Activated CD4-positive, alpha-beta T cell treated with anti-CD3 and anti-CD28 coated beads for 36 hours (primary cell): ENCODE measurements at regions of chr14 and their contacts with region 1.

Region 1: GRCh38 chr14:52272375-52272774 is 4.9 kb downstream of the PTGDR start:
- DNase-seq: peak; percentile 37
- ATAC-seq: peak; percentile 27
- H3K4me3 Mint-ChIP-seq: no peak overlapping the region
- H3K27ac Mint-ChIP-seq: no peak overlapping the region
- H3K4me1 Mint-ChIP-seq: peaks cover 18% of the 10 kb centered on the region
- H3K27me3 Mint-ChIP-seq: peaks cover 30% of the 10 kb centered on the region

Region 2: GRCh38 chr14:51783765-51784164 is 488.6 kb before region 1 on chr14:
- CTCF ChIA-PET with region 1: no interaction called
- POLR2A ChIA-PET with region 1: no interaction called
- intact Hi-C with region 1: no loop called
- DNase-seq: no peak
- ATAC-seq: peak; percentile 52
- H3K4me3 Mint-ChIP-seq: no peak overlapping the region
- H3K27ac Mint-ChIP-seq: no peak overlapping the region
- H3K4me1 Mint-ChIP-seq: peaks cover 23% of the 10 kb centered on the region
- H3K27me3 Mint-ChIP-seq: peaks cover 9% of the 10 kb centered on the region

Region 3: GRCh38 chr14:52068615-52069303 is 203.6 kb before region 1 on chr14 and contains the start of gene NID2:
- CTCF ChIA-PET with region 1: interaction called, 3 read pairs
- POLR2A ChIA-PET with region 1: no interaction called
- intact Hi-C with region 1: loop called in 1 of 2 experiments (anchors 10 kb)
- DNase-seq: peak; percentile 65
- ATAC-seq: peak; percentile 84
- H3K4me3 Mint-ChIP-seq: peak within 1 kb of the TSS; percentile 55
- H3K27ac Mint-ChIP-seq: no peak within 1 kb of the TSS
- H3K4me1 Mint-ChIP-seq: peaks cover 22% of the 10 kb centered on the region
- H3K27me3 Mint-ChIP-seq: peaks cover 47% of the 10 kb centered on the region
- total RNA-seq, gene NID2: not detected

Region 4: GRCh38 chr14:52258783-52259182 is 13.6 kb before region 1 on chr14:
- CTCF ChIA-PET with region 1: no interaction called
- POLR2A ChIA-PET with region 1: no interaction called
- intact Hi-C with region 1: no loop called
- DNase-seq: no peak
- ATAC-seq: no peak
- H3K4me3 Mint-ChIP-seq: no peak overlapping the region
- H3K27ac Mint-ChIP-seq: no peak overlapping the region
- H3K4me1 Mint-ChIP-seq: peaks cover 6% of the 10 kb centered on the region
- H3K27me3 Mint-ChIP-seq: peaks cover 8% of the 10 kb centered on the region

Region 5: DNA sequence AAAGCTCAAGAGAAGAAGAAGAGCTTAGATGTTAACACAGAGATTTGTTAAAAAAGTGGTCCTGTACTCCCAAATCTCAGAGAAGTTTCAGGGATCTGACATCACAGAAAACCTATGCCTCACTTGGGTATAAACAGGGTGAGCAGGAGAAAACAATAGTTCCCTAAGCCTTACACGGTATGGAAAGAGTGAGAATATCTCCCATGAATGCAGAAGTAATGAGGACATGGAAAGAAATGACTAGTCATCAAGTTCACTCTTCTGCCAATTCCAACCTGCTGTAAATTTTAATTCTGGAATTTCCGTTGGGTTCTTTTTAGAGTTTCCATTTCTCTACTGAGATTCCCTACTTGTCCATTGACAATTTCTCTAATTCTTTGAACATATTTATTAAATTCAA is 35.5 kb after region 1 on chr14:
- CTCF ChIA-PET with region 1: no interaction called
- POLR2A ChIA-PET with region 1: no interaction called
- intact Hi-C with region 1: no loop called
- DNase-seq: no peak
- ATAC-seq: no peak
- H3K4me3 Mint-ChIP-seq: no peak overlapping the region
- H3K27ac Mint-ChIP-seq: no peak overlapping the region
- H3K4me1 Mint-ChIP-seq: peaks cover 23% of the 10 kb centered on the region
- H3K27me3 Mint-ChIP-seq: peaks cover 22% of the 10 kb centered on the region